ENCODE measurements at regions of chr12 and their contacts with region 1.

Region 1: DNA sequence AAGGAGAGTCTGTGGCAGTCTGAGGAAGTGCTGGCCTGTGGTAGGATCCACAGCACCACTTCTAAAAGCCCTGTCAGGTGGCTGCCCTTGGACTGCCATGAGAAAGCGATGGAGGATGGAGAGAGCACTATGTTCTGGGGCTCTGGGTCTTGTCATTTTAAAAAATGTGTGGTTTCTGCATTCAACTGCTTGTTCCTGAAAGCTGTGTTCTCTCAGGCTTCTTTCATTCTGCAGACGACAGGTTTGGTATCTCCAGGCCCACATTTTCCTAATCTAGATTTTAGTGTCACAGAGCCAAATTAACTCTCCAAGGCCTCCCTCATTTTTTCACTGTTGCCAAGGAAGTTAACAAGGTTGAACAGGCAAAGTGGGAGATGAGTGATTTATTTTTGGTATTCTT is 10.5 kb downstream of the OVCH1 start:
- DNase-seq: no peak
- H3K4me3 Mint-ChIP-seq: no peak overlapping the region
- H3K27ac Mint-ChIP-seq: no peak overlapping the region
- H3K4me1 Mint-ChIP-seq: peaks cover 4% of the 10 kb centered on the region
- H3K27me3 Mint-ChIP-seq: no peaks in the 10 kb centered on the region
- CTCF ChIP-seq: no peak

Region 2: DNA sequence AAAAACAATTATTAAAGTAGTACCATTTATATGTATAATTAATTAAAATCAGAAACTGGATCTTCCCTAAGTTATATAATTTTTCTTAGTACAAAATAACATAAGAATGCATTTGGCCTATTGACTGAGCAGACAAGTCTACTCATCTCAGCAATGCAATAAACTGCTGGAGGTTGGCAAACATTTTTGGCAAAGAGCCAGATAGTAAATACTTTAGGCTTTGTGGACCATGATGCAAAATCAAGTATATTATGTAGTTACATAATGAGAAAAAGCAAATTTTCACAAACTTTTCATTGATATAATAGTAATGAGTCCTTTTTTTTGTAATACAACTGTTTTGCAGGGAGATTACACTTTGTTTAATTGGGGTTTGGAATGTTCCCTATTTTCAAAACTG is 136.9 kb before region 1 on chr12:
- CTCF ChIA-PET with region 1: no interaction called
- POLR2A ChIA-PET with region 1: no interaction called
- intact Hi-C with region 1: loop called (anchors 10 kb)
- DNase-seq: peak; percentile 55
- H3K4me3 Mint-ChIP-seq: no peak overlapping the region
- H3K27ac Mint-ChIP-seq: no peak overlapping the region
- H3K4me1 Mint-ChIP-seq: no peaks in the 10 kb centered on the region
- H3K27me3 Mint-ChIP-seq: no peaks in the 10 kb centered on the region
- CTCF ChIP-seq: no peak

Region 3: DNA sequence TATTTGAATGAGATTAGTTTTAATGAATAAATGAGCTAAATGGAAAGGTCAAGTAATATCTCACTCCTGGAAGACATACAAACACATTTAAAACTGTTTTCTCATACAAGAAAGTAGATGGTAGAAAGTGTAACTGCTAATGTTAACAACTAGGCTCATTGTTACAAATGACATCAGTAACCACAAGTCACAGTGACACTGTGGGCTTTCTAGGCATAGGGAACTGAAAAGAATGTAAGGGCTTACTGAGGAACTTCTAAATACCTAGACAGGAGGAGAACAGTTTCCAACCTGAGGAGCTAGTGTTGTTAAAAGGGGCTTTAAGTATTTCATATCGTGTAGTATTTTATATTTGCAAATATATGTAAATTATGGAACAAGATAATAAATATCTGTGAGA is 88.5 kb before region 1 on chr12:
- CTCF ChIA-PET with region 1: no interaction called
- POLR2A ChIA-PET with region 1: no interaction called
- intact Hi-C with region 1: no loop called
- DNase-seq: no peak
- H3K4me3 Mint-ChIP-seq: no peak overlapping the region
- H3K27ac Mint-ChIP-seq: peak overlapping the region; percentile 63
- H3K4me1 Mint-ChIP-seq: peaks cover 5% of the 10 kb centered on the region
- H3K27me3 Mint-ChIP-seq: no peaks in the 10 kb centered on the region
- CTCF ChIP-seq: no peak